ENCODE measurements at regions of chr5 and their contacts with region 1.

Region 1: DNA sequence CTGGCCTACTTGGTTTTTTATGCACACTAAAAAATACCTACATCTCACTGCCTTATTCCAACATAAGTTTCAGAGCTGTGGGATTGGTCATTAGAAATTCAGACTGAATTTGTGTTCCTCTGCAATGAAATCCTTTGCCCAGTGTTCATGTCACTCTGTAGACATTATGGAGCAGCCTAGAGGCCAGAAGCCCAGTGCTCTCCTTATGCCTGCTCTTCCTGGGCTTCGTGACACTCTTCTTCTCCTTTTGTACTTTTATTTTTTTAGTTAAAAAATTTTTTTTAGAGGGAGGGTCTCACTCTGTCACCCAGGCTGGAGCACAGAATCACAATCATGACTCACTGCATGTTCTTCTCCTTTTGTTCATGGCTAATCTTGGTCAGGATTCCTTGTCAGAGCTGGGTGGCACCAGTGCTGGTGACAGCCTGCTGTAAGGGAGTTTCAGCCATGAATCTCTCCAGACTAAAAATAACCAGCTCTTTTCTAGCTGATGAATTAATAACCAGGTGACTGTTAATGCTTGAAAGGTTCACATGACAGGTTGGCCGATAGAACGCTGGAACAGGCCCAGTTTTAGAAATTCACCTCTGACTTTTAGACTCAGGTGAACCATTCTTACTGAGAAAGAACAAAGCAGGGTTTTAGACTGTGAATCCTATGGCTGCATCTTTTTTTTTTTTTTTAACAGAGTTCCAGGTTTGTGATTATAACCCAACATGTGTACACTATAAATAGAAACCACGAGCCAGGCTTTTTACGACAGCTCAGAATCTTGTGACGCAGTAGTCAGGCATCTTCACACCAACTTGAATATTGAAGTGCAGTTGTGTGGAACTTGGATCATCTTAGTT is 34.1 kb upstream of the C5orf47 start:
- DNase-seq: peak; percentile 50
- ATAC-seq: peak; percentile 53
- H3K4me3 ChIP-seq: no peak overlapping the region
- H3K27ac ChIP-seq: peak overlapping the region; percentile 71
- H3K4me1 ChIP-seq: peaks cover 33% of the 10 kb centered on the region
- H3K27me3 ChIP-seq: no peaks in the 10 kb centered on the region
- CTCF ChIP-seq: no peak

Region 2: GRCh38 chr5:173671121-173671949 is 283.6 kb before region 1 on chr5:
- CTCF ChIA-PET with region 1: no interaction called
- POLR2A ChIA-PET with region 1: no interaction called
- intact Hi-C with region 1: no loop called
- DNase-seq: no peak
- ATAC-seq: no peak
- H3K4me3 ChIP-seq: no peak overlapping the region
- H3K27ac ChIP-seq: no peak overlapping the region
- H3K4me1 ChIP-seq: no peaks in the 10 kb centered on the region
- H3K27me3 ChIP-seq: no peaks in the 10 kb centered on the region
- CTCF ChIP-seq: no peak

Region 3: GRCh38 chr5:173868076-173868880 is 86.6 kb before region 1 on chr5:
- CTCF ChIA-PET with region 1: no interaction called
- POLR2A ChIA-PET with region 1: interaction called, 10 read pairs
- intact Hi-C with region 1: no loop called
- DNase-seq: peak; percentile 95
- ATAC-seq: peak; percentile 77
- H3K4me3 ChIP-seq: peak overlapping the region; percentile 5; the same call in 1 of the 2 replicates
- H3K27ac ChIP-seq: peak overlapping the region; percentile 80
- H3K4me1 ChIP-seq: peaks cover 27% of the 10 kb centered on the region
- H3K27me3 ChIP-seq: no peaks in the 10 kb centered on the region
- CTCF ChIP-seq: no peak

Region 4: DNA sequence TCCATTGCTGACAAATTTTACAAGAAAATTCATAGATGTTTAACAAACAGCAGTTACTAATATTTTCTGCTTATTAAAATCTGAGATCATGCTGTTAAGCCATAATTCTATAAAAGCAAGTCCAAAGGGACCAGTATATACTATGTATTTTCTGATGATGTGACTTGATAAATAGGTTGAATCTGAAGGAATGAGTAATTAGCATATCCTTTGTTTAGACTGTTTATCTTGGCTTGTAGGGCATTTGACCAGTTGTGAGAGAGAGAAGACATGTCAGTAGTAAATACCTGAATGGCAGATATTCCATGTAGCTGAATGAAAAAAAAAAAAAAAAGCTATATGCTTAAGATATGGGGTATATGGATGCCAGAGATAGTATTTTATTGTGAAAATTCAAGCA is 52.2 kb before region 1 on chr5:
- CTCF ChIA-PET with region 1: no interaction called
- POLR2A ChIA-PET with region 1: no interaction called
- intact Hi-C with region 1: loop called (anchors 1 kb)
- DNase-seq: peak; percentile 59
- ATAC-seq: peak; percentile 88
- H3K4me3 ChIP-seq: no peak overlapping the region
- H3K27ac ChIP-seq: peak overlapping the region; percentile 72
- H3K4me1 ChIP-seq: peaks cover 28% of the 10 kb centered on the region
- H3K27me3 ChIP-seq: no peaks in the 10 kb centered on the region
- CTCF ChIP-seq: no peak

Region 5: DNA sequence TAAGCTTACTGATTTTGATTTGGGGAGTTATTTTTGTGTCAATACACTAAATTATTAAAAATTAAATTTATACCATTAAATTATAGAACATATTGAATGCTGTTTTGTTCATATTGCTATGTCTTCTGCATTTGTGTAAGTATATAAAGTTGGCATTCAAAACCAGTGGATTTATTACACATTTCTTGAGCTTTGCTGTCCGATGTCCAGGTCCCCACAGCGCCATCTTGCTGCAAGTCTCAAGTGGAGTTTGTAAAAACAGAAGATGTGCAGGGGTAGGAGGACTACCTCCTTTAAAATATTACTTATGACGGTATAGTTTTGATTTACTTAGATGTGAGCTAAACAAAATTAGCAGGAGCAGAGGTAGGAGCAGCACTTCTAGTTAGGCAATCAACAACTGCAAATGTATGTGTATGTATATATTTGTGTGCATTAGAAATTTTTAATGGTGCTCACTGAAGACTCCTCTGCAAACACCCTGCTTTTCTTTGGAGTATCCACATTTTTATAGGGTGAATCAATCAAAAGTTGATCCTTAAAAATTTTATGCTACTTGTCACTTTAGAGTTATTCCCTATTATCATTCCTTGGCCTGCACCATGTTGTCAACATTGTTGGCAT is 29.3 kb before region 1 on chr5:
- CTCF ChIA-PET with region 1: no interaction called
- POLR2A ChIA-PET with region 1: no interaction called
- intact Hi-C with region 1: loop called (anchors 1 kb)
- DNase-seq: peak; percentile 72
- ATAC-seq: peak; percentile 23
- H3K4me3 ChIP-seq: no peak overlapping the region
- H3K27ac ChIP-seq: peak overlapping the region; percentile 27
- H3K4me1 ChIP-seq: peaks cover 29% of the 10 kb centered on the region
- H3K27me3 ChIP-seq: no peaks in the 10 kb centered on the region
- CTCF ChIP-seq: peak; percentile 82

Region 6: GRCh38 chr5:173941758-173942401 is 13.0 kb before region 1 on chr5:
- CTCF ChIA-PET with region 1: no interaction called
- POLR2A ChIA-PET with region 1: no interaction called
- intact Hi-C with region 1: loop called (anchors 1 kb)
- DNase-seq: peak; percentile 64
- ATAC-seq: peak; percentile 82
- H3K4me3 ChIP-seq: peak overlapping the region; percentile 28; the same call in 1 of the 2 replicates
- H3K27ac ChIP-seq: peak overlapping the region; percentile 56
- H3K4me1 ChIP-seq: peaks cover 43% of the 10 kb centered on the region
- H3K27me3 ChIP-seq: no peaks in the 10 kb centered on the region
- CTCF ChIP-seq: no peak

Region 7: GRCh38 chr5:174065528-174066197 is 110.8 kb after region 1 on chr5:
- CTCF ChIA-PET with region 1: no interaction called
- POLR2A ChIA-PET with region 1: no interaction called
- intact Hi-C with region 1: no loop called
- DNase-seq: no peak
- ATAC-seq: no peak
- H3K4me3 ChIP-seq: no peak overlapping the region
- H3K27ac ChIP-seq: no peak overlapping the region
- H3K4me1 ChIP-seq: no peaks in the 10 kb centered on the region
- H3K27me3 ChIP-seq: peaks cover 74% of the 10 kb centered on the region
- CTCF ChIP-seq: no peak

Region 8: DNA sequence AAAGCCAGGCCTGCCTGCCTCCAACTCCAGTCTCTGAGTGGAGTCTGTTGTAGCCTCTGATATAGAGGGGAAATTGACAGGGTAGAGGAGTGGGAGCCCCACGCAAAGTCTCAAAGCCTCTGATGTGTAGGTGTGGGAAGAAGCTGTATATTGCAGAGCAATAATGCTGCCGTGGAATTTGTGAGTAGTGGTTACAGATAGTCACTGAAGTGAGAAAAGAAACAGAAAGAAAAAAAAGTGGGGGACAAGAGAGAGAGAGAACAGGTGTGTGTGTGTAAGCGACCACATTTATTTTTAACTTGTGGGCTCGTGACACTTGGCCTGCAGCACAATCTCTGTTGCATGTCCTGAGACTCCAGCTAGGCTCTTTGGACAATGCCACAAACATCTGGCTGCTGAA is 318.4 kb after region 1 on chr5:
- CTCF ChIA-PET with region 1: no interaction called
- POLR2A ChIA-PET with region 1: no interaction called
- intact Hi-C with region 1: no loop called
- DNase-seq: no peak
- ATAC-seq: no peak
- H3K4me3 ChIP-seq: no peak overlapping the region
- H3K27ac ChIP-seq: no peak overlapping the region
- H3K4me1 ChIP-seq: no peaks in the 10 kb centered on the region
- H3K27me3 ChIP-seq: peaks cover 54% of the 10 kb centered on the region
- CTCF ChIP-seq: no peak